Right ventricle myocardium superior (tissue), 1 donor: ENCODE measurements at regions of chr20 and their contacts with region 1.

Region 1: GRCh38 chr20:34069341-34070078 is 42.5 kb downstream of the EIF2S2 start:
- DNase-seq: peak; percentile 68
- ATAC-seq: peak; percentile 93

Region 2: DNA sequence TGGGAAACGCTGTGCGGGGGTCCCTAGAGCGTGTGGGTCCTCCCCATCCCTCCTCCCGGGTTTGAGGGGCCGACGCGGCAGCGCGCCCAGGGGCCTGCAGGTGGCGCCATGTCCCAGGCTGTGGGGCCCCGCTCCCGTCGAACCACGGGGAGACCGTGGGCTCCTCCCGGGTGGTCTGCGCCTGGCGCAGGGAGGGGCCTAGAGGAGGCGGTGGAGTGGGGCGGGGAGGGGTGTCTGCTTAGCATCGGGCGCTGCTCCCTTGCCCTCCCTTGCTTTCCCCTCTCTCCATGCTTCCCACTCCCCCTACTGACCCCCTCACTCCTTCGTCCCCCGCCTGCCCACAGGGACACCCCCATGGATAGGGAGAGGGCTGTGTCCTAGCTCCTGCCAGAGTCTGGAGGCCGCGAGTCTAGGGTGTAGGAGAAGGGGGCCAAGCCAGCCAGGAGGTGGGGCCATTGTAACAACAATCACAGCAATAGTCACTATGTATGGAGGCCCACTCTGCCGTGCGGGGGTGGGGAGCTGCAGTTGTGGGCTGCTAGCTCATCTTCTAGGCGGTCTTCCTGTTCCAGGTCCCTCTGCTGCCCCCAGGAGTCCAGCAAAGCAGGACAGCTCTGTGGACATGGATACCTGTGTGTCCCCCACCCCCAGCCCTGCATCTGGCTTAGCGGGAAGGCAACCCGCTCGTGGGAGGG is 206.7 kb before region 1 on chr20:
- intact Hi-C with region 1: loop called (anchors 5 kb)
- DNase-seq: peak; percentile 61
- ATAC-seq: peak; percentile 72

Region 3: GRCh38 chr20:33933469-33933909 is 136.0 kb before region 1 on chr20:
- intact Hi-C with region 1: loop called (anchors 5 kb)
- DNase-seq: peak; percentile 70
- ATAC-seq: peak; percentile 96

Region 4: DNA sequence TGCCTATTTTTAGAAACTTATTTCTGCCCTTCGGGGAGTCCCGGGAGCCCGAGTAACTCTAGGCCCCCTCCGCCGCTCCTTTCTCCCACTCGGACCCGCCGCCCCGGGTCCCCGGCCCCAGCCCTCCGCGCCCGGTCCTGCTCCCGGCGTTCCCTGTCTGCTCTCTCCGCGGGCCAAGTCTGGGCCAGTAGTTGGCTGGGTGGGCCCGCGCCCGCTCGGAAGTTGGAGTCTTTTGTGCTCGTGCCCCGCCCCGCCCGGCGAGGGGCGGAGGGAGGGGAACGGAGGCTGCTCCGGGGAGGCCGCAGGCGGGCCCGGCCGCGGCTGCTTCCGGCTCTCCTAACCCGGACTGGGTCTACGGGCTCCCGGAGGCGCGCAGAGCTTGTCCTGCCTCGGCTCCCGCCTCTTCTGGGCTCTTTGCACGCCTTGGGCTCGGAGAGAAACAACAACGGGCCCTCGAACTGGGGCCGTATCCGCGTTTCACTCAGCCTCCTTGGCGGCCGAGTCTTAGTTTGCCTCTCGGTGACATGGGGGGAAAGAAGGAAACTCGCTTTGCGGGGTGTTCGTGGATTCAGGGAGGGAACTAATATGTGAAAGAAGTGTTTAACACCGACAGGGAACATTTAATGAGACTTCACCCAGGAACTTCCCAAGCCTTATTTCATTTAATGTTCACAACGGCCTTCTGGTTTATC is 75.1 kb before region 1 on chr20:
- intact Hi-C with region 1: loop called (anchors 2 kb)
- DNase-seq: peak; percentile 93
- ATAC-seq: peak; percentile 63

Region 5: GRCh38 chr20:34129518-34130162 is 60.1 kb after region 1 on chr20:
- intact Hi-C with region 1: loop called (anchors 10 kb)
- DNase-seq: peak; percentile 64
- ATAC-seq: peak; percentile 91